ENCODE measurements at regions of chr21 and their contacts with region 1.

Region 1: DNA sequence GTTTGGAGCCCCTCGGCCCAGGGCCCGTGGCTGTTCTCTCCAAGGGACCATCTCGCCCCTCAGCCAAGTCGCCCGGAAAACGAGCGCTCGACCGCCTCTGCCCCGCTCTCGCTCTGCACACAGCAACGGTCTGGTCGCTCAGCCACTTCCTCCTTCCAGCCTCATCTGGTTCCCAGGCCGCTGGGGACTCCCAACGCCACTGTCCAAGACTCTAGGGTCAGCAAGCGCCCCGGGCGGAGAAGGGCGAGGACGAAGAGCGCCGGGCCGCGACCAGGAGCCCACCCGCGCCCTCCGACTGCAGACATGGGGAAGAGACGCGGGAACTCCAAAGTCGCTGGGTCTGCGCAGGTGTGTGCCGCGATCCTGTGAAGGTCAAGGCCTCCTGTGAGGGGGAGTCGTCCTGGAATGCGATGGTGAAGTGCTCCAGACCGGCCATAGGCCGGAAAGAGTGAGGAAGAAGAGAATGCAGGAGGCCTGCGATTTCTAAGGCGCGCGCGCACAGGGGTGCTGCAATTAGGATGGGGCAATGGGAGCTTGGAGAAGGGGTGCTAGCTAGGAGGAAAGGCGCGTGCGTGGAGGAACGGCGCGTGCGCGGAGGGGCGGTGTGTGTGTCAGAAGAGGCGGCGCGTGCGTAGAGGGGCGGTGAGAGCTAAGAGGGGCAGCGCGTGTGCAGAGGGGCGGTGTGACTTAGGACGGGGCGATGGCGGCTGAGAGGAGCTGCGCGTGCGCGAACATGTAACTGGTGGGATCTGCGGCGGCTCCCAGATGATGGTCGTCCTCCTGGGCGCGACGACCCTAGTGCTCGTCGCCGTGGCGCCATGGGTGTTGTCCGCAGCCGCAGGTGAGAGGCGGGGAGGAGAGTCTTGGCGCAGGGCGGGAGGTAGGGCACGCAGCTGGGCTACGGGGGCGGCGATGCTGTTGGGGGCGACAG is at the start of gene IFNAR1:
- DNase-seq: peak; percentile 94 to 99 (median 98)
- H3K4me3 ChIP-seq: peak within 1 kb of the TSS; percentile 90 to 99
- H3K4me3 Mint-ChIP-seq: no peak within 1 kb of the TSS
- H3K27ac ChIP-seq: peak within 1 kb of the TSS; percentile 95
- H3K27ac Mint-ChIP-seq: no peak within 1 kb of the TSS
- H3K4me1 ChIP-seq: peaks cover 39% of the 10 kb centered on the region
- H3K4me1 Mint-ChIP-seq: peaks cover 18 to 32% (median 26%) of the 10 kb centered on the region in 4 donors
- H3K27me3 ChIP-seq: no peaks in the 10 kb centered on the region
- H3K27me3 Mint-ChIP-seq: no peaks in the 10 kb centered on the region
- total RNA-seq, gene IFNAR1: 60.1 to 62.5 TPM

Region 2: DNA sequence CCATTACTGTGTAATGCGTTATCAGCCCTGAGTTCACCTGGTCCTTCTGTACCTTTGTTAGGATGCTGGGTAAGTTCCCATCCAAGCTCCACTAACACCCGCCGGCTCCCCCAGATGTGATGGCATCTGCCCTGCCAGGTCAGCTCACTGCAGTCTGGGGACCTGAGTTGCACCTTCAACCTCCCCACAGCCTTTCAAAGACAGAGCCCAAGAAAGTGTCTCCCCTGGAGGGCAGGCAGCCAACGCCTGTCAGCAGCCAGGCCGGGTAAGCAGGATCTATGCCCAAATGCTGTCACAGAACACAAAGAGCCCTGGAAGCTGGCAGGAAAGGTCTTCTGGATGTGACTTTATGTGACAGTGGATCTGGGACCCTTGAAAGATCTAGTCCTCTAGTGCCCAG is 1012.2 kb before region 1 on chr21:
- CTCF ChIA-PET with region 1: no interaction called
- POLR2A ChIA-PET with region 1: no interaction called
- intact Hi-C with region 1: no loop called
- DNase-seq: no peak
- H3K4me3 ChIP-seq: no peak overlapping the region
- H3K4me3 Mint-ChIP-seq: no peak overlapping the region
- H3K27ac ChIP-seq: no peak overlapping the region
- H3K27ac Mint-ChIP-seq: peak overlapping the region in 1 of 7 donors; percentile 74
- H3K4me1 ChIP-seq: no peaks in the 10 kb centered on the region
- H3K4me1 Mint-ChIP-seq: no peaks in the 10 kb centered on the region
- H3K27me3 ChIP-seq: no peaks in the 10 kb centered on the region
- H3K27me3 Mint-ChIP-seq: no peaks in the 10 kb centered on the region

Region 3: GRCh38 chr21:32949701-32950100 is 374.9 kb before region 1 on chr21:
- CTCF ChIA-PET with region 1: no interaction called
- POLR2A ChIA-PET with region 1: no interaction called
- intact Hi-C with region 1: no loop called
- DNase-seq: no peak
- H3K4me3 ChIP-seq: no peak overlapping the region
- H3K4me3 Mint-ChIP-seq: no peak overlapping the region
- H3K27ac ChIP-seq: no peak overlapping the region
- H3K27ac Mint-ChIP-seq: peak overlapping the region in 1 of 7 donors; percentile 4
- H3K4me1 ChIP-seq: no peaks in the 10 kb centered on the region
- H3K4me1 Mint-ChIP-seq: no peaks in the 10 kb centered on the region
- H3K27me3 ChIP-seq: peaks cover 7% of the 10 kb centered on the region
- H3K27me3 Mint-ChIP-seq: peaks cover 15 to 20% of the 10 kb centered on the region in 2 donors

Region 4: DNA sequence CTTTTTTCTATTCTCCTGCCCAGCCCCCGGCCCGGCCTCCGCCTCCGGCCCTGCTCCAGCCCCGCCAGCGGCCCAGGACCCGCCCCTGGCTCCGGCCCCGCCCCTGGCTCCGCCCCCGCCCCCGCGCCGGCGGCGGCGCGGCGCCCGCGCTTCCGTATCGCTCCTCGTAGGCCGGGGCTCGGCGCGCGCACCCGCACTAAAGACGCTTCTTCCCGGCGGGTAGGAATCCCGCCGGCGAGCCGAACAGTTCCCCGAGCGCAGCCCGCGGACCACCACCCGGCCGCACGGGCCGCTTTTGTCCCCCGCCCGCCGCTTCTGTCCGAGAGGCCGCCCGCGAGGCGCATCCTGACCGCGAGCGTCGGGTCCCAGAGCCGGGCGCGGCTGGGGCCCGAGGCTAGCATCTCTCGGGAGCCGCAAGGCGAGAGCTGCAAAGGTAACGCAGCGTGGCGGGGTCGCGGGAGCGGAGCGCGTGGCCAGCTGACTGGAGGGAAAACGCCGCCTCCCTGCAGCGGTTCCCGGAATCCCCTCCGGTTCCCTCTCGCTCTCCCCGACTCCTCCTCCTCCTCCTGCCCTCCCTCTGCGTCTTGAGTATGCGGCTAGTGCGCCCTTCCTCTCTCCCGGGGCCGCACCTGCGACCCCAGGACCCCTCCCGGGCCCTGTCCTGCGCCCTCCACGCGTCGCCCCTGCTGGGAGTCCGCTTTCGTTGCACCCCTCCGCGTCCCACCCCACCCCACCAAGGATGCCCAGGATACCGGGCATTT is 94.6 kb before region 1 on chr21 and contains the start of gene IFNAR2:
- CTCF ChIA-PET with region 1: interaction called, 4 read pairs
- POLR2A ChIA-PET with region 1: interaction called, 18 read pairs
- intact Hi-C with region 1: loop called (anchors 5 kb)
- DNase-seq: peak; percentile 63 to 73 (median 66)
- H3K4me3 ChIP-seq: peak within 1 kb of the TSS; percentile 70 to 87
- H3K4me3 Mint-ChIP-seq: peak within 1 kb of the TSS; percentile 89 to 97 (median 94)
- H3K27ac ChIP-seq: peak within 1 kb of the TSS; percentile 86
- H3K27ac Mint-ChIP-seq: peak within 1 kb of the TSS; percentile 90 to 96 (median 94)
- H3K4me1 ChIP-seq: peaks cover 41% of the 10 kb centered on the region
- H3K4me1 Mint-ChIP-seq: peaks cover 32 to 49% (median 39%) of the 10 kb centered on the region in 4 donors
- H3K27me3 ChIP-seq: no peaks in the 10 kb centered on the region
- H3K27me3 Mint-ChIP-seq: no peaks in the 10 kb centered on the region
- total RNA-seq, gene IFNAR2: 76.5 to 77.7 TPM

Region 5: DNA sequence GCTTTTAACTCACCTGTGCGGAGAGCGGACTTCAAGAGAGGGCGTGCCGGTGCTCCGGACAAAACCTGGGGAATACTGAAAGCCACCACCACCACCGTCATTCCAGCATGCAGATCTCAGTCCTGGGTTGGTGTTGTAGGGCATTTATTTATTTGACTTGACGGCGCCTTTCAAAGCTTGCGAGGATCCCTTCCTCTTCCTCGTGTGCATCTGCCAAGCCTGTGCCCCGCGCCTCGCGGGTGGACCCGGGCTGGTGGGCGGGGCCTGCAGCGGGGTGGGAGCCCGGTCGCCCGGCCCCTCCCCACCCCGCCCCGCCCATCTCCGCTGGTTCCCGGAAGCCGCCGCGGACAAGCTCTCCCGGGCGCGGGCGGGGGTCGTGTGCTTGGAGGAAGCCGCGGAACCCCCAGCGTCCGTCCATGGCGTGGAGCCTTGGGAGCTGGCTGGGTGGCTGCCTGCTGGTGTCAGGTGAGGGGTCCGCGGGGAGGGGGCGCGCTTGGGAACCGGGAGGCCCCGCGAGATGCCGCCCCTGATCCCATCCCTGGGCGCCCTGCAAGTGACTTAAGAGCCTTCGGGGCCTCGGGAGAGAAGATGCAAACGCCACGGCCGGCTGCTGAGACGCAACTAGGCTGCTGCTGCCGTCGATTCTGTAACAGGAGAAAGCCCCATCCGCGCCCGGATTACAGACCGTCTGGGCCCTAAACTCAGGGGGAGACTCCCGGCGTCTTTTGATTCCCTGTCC is 58.3 kb before region 1 on chr21 and contains the start of gene IL10RB:
- CTCF ChIA-PET with region 1: interaction called, 5 read pairs
- POLR2A ChIA-PET with region 1: interaction called, 36 read pairs
- intact Hi-C with region 1: loop called (anchors 1 kb)
- DNase-seq: peak; percentile 61 to 77 (median 68)
- H3K4me3 ChIP-seq: peak within 1 kb of the TSS; percentile 54 to 79
- H3K4me3 Mint-ChIP-seq: peak within 1 kb of the TSS; percentile 93 to 99 (median 96)
- H3K27ac ChIP-seq: peak within 1 kb of the TSS; percentile 80
- H3K27ac Mint-ChIP-seq: peak within 1 kb of the TSS; percentile 92 to 97 (median 95)
- H3K4me1 ChIP-seq: peaks cover 59% of the 10 kb centered on the region
- H3K4me1 Mint-ChIP-seq: peaks cover 38 to 74% (median 50%) of the 10 kb centered on the region in 4 donors
- H3K27me3 ChIP-seq: no peaks in the 10 kb centered on the region
- H3K27me3 Mint-ChIP-seq: no peaks in the 10 kb centered on the region
- total RNA-seq, gene IL10RB: 30.6 to 36.4 TPM

Region 6: DNA sequence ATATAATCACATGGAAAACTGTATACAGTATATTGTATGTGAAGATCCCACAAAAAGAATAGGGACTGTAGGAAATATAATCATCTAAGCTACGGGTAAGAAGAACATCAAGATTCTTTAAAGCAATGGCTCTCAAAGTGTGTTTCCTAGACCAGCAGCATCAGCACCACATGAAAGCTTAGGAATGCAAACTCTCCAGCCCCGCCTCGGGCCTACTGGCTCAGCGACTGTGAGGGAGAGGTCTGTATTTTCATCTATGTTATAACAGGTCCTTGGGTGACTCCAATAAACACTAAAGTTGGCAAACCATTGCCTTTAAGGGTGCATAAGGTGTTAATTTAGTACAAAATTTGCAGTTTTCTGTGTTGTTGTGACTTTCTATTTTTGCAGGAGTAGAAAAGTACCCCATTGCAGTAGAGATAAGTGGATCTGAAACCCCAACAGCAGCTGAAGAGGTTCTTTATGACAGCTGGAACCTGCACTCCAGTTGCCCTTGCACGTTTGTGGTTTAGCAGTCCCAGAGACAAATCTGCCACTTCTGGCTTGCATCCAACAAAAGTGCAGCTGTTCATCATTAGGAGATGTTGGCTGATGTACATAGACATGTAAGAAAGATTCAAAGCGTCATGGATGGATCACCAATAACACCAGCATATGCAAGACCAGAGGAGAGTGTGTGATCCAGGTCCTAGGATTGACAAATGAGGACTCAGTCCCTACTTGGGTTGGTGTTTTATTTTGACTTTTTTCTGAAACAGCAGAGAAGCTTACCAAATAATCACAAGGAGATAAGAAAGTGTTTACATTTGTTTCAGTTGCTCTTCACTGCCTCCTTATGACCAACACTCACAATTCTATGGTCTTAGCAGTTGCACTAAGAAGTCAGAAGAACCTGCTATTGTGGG is 15.7 kb before region 1 on chr21:
- CTCF ChIA-PET with region 1: no interaction called
- POLR2A ChIA-PET with region 1: interaction called, 18 read pairs
- intact Hi-C with region 1: no loop called
- DNase-seq: peak in 4 of 5 donors; percentile 36 to 49 (median 44)
- H3K4me3 ChIP-seq: no peak overlapping the region
- H3K4me3 Mint-ChIP-seq: peak overlapping the region in 2 of 8 donors; percentile 19 to 40
- H3K27ac ChIP-seq: no peak overlapping the region
- H3K27ac Mint-ChIP-seq: peak overlapping the region in 4 of 7 donors; percentile 0 to 17 (median 4)
- H3K4me1 ChIP-seq: peaks cover 12% of the 10 kb centered on the region
- H3K4me1 Mint-ChIP-seq: peaks cover 9 to 38% (median 22%) of the 10 kb centered on the region in 4 donors
- H3K27me3 ChIP-seq: no peaks in the 10 kb centered on the region
- H3K27me3 Mint-ChIP-seq: no peaks in the 10 kb centered on the region

Region 7: DNA sequence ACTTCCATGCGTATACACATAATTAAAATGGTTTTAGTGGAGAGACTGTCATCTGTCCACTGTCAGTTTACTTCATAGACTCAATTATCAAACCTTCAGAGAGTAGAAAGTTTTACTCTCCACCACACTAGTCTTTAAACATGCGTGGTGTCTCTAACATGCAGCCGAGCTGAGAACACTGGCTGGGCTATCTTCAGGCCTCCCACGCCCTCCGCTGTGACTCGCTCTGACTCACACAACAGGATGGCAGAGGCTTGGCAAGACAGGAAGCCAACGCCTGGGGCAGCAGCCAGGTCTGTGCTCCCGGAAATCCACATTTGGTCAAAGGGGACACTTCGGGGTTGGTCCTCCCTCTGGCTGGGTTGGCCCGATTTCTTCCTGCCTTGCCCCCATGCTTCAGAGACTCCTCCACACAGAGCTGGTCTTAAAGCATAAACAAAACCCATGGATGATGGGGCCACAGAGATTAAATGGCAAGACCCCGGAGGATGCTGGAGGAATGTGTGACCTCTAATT is 56.0 kb after region 1 on chr21:
- CTCF ChIA-PET with region 1: interaction called, 4 read pairs
- POLR2A ChIA-PET with region 1: interaction called, 19 read pairs
- intact Hi-C with region 1: loop called (anchors 2 kb)
- DNase-seq: peak; percentile 68 to 93 (median 72)
- H3K4me3 ChIP-seq: no peak overlapping the region
- H3K4me3 Mint-ChIP-seq: peak overlapping the region in 7 of 8 donors; percentile 44 to 81 (median 66)
- H3K27ac ChIP-seq: peak overlapping the region; percentile 44
- H3K27ac Mint-ChIP-seq: peak overlapping the region; percentile 87 to 96 (median 91)
- H3K4me1 ChIP-seq: peaks cover 64% of the 10 kb centered on the region
- H3K4me1 Mint-ChIP-seq: peaks cover 45 to 74% (median 58%) of the 10 kb centered on the region in 4 donors
- H3K27me3 ChIP-seq: no peaks in the 10 kb centered on the region
- H3K27me3 Mint-ChIP-seq: no peaks in the 10 kb centered on the region

Region 8: GRCh38 chr21:33479679-33480480 is 155.3 kb after region 1 on chr21 and contains the start of gene TMEM50B:
- CTCF ChIA-PET with region 1: no interaction called
- POLR2A ChIA-PET with region 1: interaction called, 19 read pairs
- intact Hi-C with region 1: no loop called
- DNase-seq: peak; percentile 91 to 95 (median 94)
- H3K4me3 ChIP-seq: peak within 1 kb of the TSS; percentile 71 to 95
- H3K4me3 Mint-ChIP-seq: peak within 1 kb of the TSS; percentile 92 to 96 (median 94)
- H3K27ac ChIP-seq: peak within 1 kb of the TSS; percentile 91
- H3K27ac Mint-ChIP-seq: peak within 1 kb of the TSS; percentile 87 to 97 (median 95)
- H3K4me1 ChIP-seq: peaks cover 14% of the 10 kb centered on the region
- H3K4me1 Mint-ChIP-seq: peaks cover 8 to 29% (median 19%) of the 10 kb centered on the region in 4 donors
- H3K27me3 ChIP-seq: no peaks in the 10 kb centered on the region
- H3K27me3 Mint-ChIP-seq: no peaks in the 10 kb centered on the region
- total RNA-seq, gene TMEM50B: 110 to 112 TPM

Measured in CD4-positive, alpha-beta memory T cell (primary cell).